CD4-positive, alpha-beta T cell (primary cell): ENCODE measurements at regions of chr19 and their contacts with region 1.

Region 1: GRCh38 chr19:29014907-29015306 is 198.0 kb downstream of the UQCRFS1 start:
- DNase-seq: no peak
- ATAC-seq: no peak
- H3K4me3 ChIP-seq: no peak overlapping the region
- H3K4me3 Mint-ChIP-seq: no peak overlapping the region
- H3K27ac ChIP-seq: no peak overlapping the region
- H3K27ac Mint-ChIP-seq: no peak overlapping the region
- H3K4me1 ChIP-seq: no peaks in the 10 kb centered on the region
- H3K4me1 Mint-ChIP-seq: no peaks in the 10 kb centered on the region
- H3K27me3 ChIP-seq: peaks cover 0 to 2% of the 10 kb centered on the region in 2 experiments
- H3K27me3 Mint-ChIP-seq: peaks cover 9% of the 10 kb centered on the region
- CTCF ChIP-seq: no peak

Region 2: GRCh38 chr19:29001141-29001581 is 13.7 kb before region 1 on chr19:
- CTCF ChIA-PET with region 1: no interaction called
- POLR2A ChIA-PET with region 1: no interaction called
- intact Hi-C with region 1: no loop called
- DNase-seq: no peak
- ATAC-seq: no peak
- H3K4me3 ChIP-seq: no peak overlapping the region
- H3K4me3 Mint-ChIP-seq: no peak overlapping the region
- H3K27ac ChIP-seq: no peak overlapping the region
- H3K27ac Mint-ChIP-seq: no peak overlapping the region
- H3K4me1 ChIP-seq: no peaks in the 10 kb centered on the region
- H3K4me1 Mint-ChIP-seq: no peaks in the 10 kb centered on the region
- H3K27me3 ChIP-seq: no peaks in the 10 kb centered on the region
- H3K27me3 Mint-ChIP-seq: no peaks in the 10 kb centered on the region
- CTCF ChIP-seq: no peak

Region 3: GRCh38 chr19:29415507-29415906 is 400.6 kb after region 1 on chr19:
- CTCF ChIA-PET with region 1: no interaction called
- POLR2A ChIA-PET with region 1: no interaction called
- intact Hi-C with region 1: loop called in 1 of 2 experiments (anchors 5 kb)
- DNase-seq: no peak
- ATAC-seq: no peak
- H3K4me3 ChIP-seq: no peak overlapping the region
- H3K4me3 Mint-ChIP-seq: no peak overlapping the region
- H3K27ac ChIP-seq: no peak overlapping the region
- H3K27ac Mint-ChIP-seq: no peak overlapping the region
- H3K4me1 ChIP-seq: no peaks in the 10 kb centered on the region
- H3K4me1 Mint-ChIP-seq: no peaks in the 10 kb centered on the region
- H3K27me3 ChIP-seq: no peaks in the 10 kb centered on the region
- H3K27me3 Mint-ChIP-seq: peaks cover 4% of the 10 kb centered on the region
- CTCF ChIP-seq: no peak